ENCODE measurements at regions of chr10 and their contacts with region 1.

Region 1: GRCh38 chr10:103486336-103487160 is 7.0 kb upstream of the NEURL1 start:
- DNase-seq: no peak
- H3K4me3 ChIP-seq: no peak overlapping the region
- CTCF ChIP-seq: no peak
- POLR2A ChIP-seq: no peak

Region 2: GRCh38 chr10:103416436-103417147 is 70.0 kb before region 1 on chr10:
- intact Hi-C with region 1: loop called (anchors 5 kb)
- DNase-seq: peak in 1 of 2 donors; percentile 75
- H3K4me3 ChIP-seq: no peak overlapping the region
- CTCF ChIP-seq: peak in 1 of 3 donors; percentile 5
- POLR2A ChIP-seq: no peak